Pancreas (tissue), 10 donors: ENCODE measurements at regions of chr15 and their contacts with region 1.

Region 1: DNA sequence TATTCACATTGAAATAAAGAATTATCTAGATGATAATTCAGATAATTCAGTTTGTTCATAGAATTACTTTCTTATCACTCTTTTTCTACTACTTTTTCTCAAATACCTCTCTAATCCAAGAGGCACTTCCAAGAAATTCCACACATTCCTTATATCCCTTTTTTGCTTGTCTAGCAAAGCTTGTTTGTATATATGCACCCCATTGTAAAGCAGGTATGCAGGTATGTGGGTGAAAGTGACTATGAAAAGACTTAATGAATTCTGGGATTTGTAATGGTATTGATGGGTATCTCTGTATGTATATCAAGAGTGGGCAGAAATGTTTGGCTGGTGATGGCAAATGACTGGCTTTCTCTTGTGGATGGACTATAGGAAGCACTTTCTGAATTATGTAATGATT is 94.1 kb upstream of the FGF7 start:
- DNase-seq: no peak
- ATAC-seq: no peak
- H3K4me3 ChIP-seq: no peak overlapping the region
- H3K27ac ChIP-seq: no peak overlapping the region
- H3K4me1 ChIP-seq: no peaks in the 10 kb centered on the region
- H3K27me3 ChIP-seq: no peaks in the 10 kb centered on the region
- CTCF ChIP-seq: no peak

Region 2: GRCh38 chr15:49282366-49282765 is 46.6 kb before region 1 on chr15:
- intact Hi-C with region 1: loop called in 1 of 3 experiments (anchors 5 kb)
- DNase-seq: no peak
- ATAC-seq: peak in 1 of 4 donors; percentile 22
- H3K4me3 ChIP-seq: no peak overlapping the region
- H3K27ac ChIP-seq: no peak overlapping the region
- H3K4me1 ChIP-seq: no peaks in the 10 kb centered on the region
- H3K27me3 ChIP-seq: no peaks in the 10 kb centered on the region
- CTCF ChIP-seq: no peak

Region 3: GRCh38 chr15:49438962-49439631 is 110.2 kb after region 1 on chr15:
- intact Hi-C with region 1: no loop called
- DNase-seq: peak in 1 of 6 donors; percentile 3
- ATAC-seq: peak in 2 of 4 donors; percentile 44 to 57
- H3K4me3 ChIP-seq: no peak overlapping the region
- H3K27ac ChIP-seq: no peak overlapping the region
- H3K4me1 ChIP-seq: peaks cover 0 to 5% (median 0%) of the 10 kb centered on the region in 3 donors
- H3K27me3 ChIP-seq: no peaks in the 10 kb centered on the region
- CTCF ChIP-seq: no peak